ENCODE measurements at regions of chr10 and their contacts with region 1.

Region 1: GRCh38 chr10:15852111-15852557 is 8.2 kb downstream of the MINDY3 start:
- DNase-seq: no peak
- ATAC-seq: no peak

Region 2: GRCh38 chr10:15836807-15837206 is 15.3 kb before region 1 on chr10:
- intact Hi-C with region 1: loop called (anchors 2 kb)
- DNase-seq: no peak
- ATAC-seq: no peak